ENCODE measurements at regions of chr1 and their contacts with region 1.

Region 1: GRCh38 chr1:32392325-32392724 is 1.9 kb downstream of the BSDC1 start:
- DNase-seq: no peak
- H3K4me3 Mint-ChIP-seq: no peak overlapping the region
- H3K27ac Mint-ChIP-seq: no peak overlapping the region
- H3K4me1 Mint-ChIP-seq: peaks cover 34% of the 10 kb centered on the region
- H3K27me3 Mint-ChIP-seq: peaks cover 3% of the 10 kb centered on the region

Region 2: GRCh38 chr1:32013386-32014198 is 378.7 kb before region 1 on chr1 and contains the start of gene KHDRBS1:
- CTCF ChIA-PET with region 1: interaction called, 5 read pairs
- POLR2A ChIA-PET with region 1: interaction called, 10 read pairs
- DNase-seq: peak; percentile 99
- H3K4me3 Mint-ChIP-seq: peak within 1 kb of the TSS; percentile 95
- H3K27ac Mint-ChIP-seq: peak within 1 kb of the TSS; percentile 95
- H3K4me1 Mint-ChIP-seq: peaks cover 37% of the 10 kb centered on the region
- H3K27me3 Mint-ChIP-seq: no peaks in the 10 kb centered on the region
- total RNA-seq, gene KHDRBS1: 174 to 183 TPM

Region 3: DNA sequence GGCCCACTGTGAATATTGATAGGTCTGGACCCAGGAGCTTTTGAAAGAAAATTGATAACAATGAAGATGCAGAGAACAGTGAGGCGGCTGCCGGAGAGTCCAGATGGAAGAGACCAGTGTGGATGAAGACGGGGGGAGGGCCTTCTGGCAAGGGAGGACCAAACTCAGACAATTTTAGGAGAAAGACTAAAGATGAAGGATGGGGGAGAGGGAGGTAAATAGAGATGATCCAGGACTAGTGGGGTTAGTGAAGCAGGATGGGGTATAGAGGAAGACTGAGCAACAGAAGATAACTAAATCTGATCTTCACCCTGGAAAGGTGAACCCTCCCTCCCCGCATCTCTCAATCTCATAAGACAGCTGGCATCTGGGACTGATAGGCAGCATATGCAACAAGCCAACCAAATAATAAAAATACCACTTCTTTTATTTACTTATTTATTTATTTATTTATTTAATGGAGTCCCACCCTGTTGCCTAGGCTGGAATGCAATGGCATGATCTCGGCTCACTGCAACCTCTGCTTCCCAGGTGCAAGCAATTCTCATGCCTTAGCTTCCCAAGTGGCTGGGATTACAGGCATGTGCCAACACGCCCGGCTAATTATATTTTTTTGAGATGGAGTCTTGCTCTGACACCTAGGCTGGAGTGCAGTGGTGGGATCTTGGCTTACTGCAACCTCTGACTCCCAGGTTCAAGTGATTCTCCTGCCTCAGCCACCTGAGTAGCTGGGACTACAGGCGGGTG is 159.6 kb before region 1 on chr1:
- CTCF ChIA-PET with region 1: no interaction called
- POLR2A ChIA-PET with region 1: no interaction called
- DNase-seq: no peak
- H3K4me3 Mint-ChIP-seq: no peak overlapping the region
- H3K27ac Mint-ChIP-seq: no peak overlapping the region
- H3K4me1 Mint-ChIP-seq: peaks cover 3% of the 10 kb centered on the region
- H3K27me3 Mint-ChIP-seq: no peaks in the 10 kb centered on the region

Region 4: DNA sequence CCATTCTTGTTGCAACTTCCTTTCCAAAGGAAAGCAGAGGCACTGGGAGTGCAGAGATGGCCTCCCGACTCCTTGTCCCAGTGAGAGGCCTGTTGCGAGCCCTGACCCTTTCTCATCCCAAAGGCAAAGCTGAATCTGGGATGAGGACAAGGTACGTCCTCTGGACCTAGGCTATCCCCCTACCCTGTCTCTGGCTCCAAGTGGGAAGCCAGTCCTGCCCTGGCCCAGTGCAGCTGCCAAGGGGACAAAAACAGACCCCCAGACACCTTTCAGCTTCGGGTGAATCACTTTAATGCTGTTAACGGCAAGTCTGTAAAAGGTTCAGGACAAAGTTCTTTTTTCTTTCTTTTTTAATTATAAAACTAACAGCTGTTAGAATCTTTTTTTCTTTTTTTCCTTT is 27.5 kb before region 1 on chr1:
- CTCF ChIA-PET with region 1: no interaction called
- POLR2A ChIA-PET with region 1: no interaction called
- DNase-seq: no peak
- H3K4me3 Mint-ChIP-seq: no peak overlapping the region
- H3K27ac Mint-ChIP-seq: no peak overlapping the region
- H3K4me1 Mint-ChIP-seq: peaks cover 10% of the 10 kb centered on the region
- H3K27me3 Mint-ChIP-seq: peaks cover 7% of the 10 kb centered on the region

Region 5: DNA sequence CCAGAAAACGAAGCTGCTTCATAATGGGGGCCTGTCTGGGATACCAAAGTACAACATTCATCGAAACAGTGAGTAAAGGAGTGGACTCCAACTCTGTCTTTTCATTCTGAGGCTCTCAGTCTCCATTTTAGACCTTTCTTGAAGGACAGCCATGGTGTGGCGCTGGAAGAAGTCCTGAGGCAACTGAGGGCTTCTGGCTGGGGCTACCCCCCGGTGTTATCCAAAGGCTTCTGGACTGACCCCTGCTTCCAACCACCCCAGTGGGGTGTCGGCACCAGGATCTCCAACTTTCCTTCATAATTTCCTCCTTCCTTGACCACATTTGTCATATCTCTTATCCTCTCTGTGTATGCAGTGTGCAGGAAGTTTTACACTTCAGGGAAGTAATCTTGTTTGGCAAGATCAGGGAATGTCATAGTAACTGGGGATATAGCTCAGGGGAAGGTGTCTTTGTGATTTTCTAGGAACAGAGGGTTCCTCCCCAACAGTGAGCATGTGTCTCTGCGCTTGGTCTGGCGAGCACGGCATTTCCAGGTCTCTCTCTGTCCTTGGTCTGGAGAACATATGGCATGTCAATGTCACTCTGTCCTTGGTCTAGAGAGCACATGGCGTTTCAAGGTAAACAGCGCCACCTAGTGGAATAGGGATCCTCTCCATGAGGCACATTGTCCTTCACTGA is 21.3 kb after region 1 on chr1:
- CTCF ChIA-PET with region 1: no interaction called
- POLR2A ChIA-PET with region 1: no interaction called
- DNase-seq: peak; percentile 86
- H3K4me3 Mint-ChIP-seq: no peak overlapping the region
- H3K27ac Mint-ChIP-seq: no peak overlapping the region
- H3K4me1 Mint-ChIP-seq: peaks cover 3% of the 10 kb centered on the region
- H3K27me3 Mint-ChIP-seq: peaks cover 7% of the 10 kb centered on the region

Measured in activated CD4-positive, alpha-beta T cell treated with anti-CD3 and anti-CD28 coated beads, Interleukin-2, amount 10 ng/mL, durations not matched to agents 7 days and 5 days (primary cell).